K562 (cell line): ENCODE measurements at regions of chr5 and their contacts with region 1.

Region 1: DNA sequence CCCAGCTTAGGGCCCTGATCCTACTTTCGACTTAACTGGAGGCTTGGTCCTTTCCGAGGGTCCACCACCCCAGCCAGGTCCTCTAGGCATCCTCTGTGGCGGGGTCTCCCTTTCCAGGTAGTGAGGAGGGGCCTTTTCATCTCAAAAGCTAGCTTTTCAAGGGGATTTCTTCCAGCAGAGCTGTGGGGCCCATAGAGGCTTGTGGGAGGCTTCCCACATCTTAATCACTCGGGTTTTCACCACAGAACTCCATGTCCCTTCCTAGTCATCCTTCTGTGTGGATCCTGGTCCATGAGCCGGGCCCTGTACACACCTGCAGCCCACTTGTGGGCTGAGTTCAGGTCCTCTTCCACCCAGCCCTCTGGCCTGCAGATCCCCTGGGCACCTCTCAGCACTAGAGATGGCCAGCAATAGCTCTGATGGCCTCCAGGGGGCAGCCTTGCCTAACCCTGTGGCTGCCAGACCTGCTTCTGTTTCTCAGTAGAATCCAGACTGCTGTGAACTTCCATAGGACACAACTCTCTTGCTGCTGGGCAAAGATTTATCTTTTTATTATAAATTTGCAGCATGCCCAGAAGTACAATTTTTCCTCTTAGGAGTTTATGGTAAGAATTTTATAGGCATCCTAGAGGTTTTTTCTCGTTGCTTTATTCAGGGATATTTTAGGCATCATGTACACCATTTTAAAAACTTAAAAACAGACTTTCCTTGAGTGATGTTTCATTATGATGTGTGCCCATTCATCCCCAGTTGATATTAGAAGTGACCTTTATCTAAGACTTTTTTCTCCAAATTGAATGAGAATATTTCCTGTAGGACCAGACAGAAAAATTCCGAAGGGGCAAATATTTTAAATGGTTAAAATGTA is 208.9 kb downstream of the TRIO start:
- DNase-seq: peak; percentile 74 to 85 (median 78)
- ATAC-seq: peak; percentile 99
- H3K4me3 ChIP-seq: no peak overlapping the region
- H3K27ac ChIP-seq: no peak overlapping the region
- H3K4me1 ChIP-seq: no peaks in the 10 kb centered on the region
- H3K27me3 ChIP-seq: peaks cover 8 to 20% of the 10 kb centered on the region in 2 experiments
- CTCF ChIP-seq: peak; percentile 87 to 97 (median 92)
- EP300 ChIP-seq: no peak
- POLR2A ChIP-seq: no peak
- RAD21 ChIP-seq: peak; percentile 67 to 84

Region 2: DNA sequence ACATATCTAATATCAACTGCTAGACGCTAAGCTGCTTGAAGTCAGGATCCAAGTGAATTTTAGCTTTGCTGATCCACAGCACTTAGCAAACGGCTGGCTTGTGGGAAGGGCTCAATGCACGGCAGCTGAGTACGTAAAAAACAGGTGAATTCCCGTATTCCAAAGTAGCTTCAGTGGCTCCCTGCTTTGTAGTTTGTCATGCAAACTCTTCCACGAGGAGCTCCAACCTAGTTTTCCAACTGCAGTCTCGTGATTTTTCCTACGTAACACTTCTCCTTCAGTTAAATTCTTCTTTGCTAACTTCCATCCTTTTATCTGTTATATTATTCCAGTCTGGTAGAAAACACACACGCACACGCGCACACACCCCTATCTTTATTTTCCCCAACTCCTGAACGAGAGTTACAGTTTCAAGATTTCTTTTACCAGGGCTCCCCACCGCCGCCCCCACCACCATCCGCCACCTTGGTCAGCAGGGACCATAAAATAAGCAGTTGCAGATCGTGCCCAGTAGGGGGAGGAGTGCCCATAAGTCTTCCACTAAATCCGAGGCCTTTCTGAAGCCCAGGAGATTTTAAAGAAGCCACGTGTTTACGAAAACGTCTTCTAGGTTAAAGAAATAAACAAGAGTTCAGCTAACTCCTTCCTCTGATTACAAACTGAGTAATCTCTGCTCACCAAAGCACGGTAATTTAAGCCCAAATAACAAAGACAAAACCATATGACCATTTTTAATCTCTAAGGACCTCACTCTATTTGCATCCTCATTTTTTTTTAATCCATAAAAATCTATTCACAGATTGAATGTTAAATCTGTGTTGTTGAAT is 243.7 kb before region 1 on chr5:
- CTCF ChIA-PET with region 1: no interaction called
- POLR2A ChIA-PET with region 1: no interaction called
- in situ Hi-C with region 1: no loop called
- intact Hi-C with region 1: loop called (anchors 10 kb)
- DNase-seq: peak; percentile 68 to 81 (median 80)
- ATAC-seq: peak; percentile 97
- H3K4me3 ChIP-seq: no peak overlapping the region
- H3K27ac ChIP-seq: no peak overlapping the region
- H3K4me1 ChIP-seq: no peaks in the 10 kb centered on the region
- H3K27me3 ChIP-seq: peaks cover 0 to 6% of the 10 kb centered on the region in 2 experiments; a peak in 3 of 5 replicates
- CTCF ChIP-seq: peak; percentile 64 to 79 (median 73)
- EP300 ChIP-seq: no peak
- POLR2A ChIP-seq: no peak
- RAD21 ChIP-seq: peak; percentile 44 to 61

Region 3: GRCh38 chr5:14118527-14119320 is 233.4 kb before region 1 on chr5:
- CTCF ChIA-PET with region 1: no interaction called
- POLR2A ChIA-PET with region 1: no interaction called
- in situ Hi-C with region 1: no loop called
- intact Hi-C with region 1: no loop called
- DNase-seq: no peak
- ATAC-seq: no peak; the same call in 2 of the 3 replicates
- H3K4me3 ChIP-seq: no peak overlapping the region
- H3K27ac ChIP-seq: no peak overlapping the region
- H3K4me1 ChIP-seq: no peaks in the 10 kb centered on the region
- H3K27me3 ChIP-seq: peaks cover 0 to 9% of the 10 kb centered on the region in 2 experiments; a peak in 1 of 5 replicates
- CTCF ChIP-seq: no peak
- EP300 ChIP-seq: no peak
- POLR2A ChIP-seq: no peak
- RAD21 ChIP-seq: no peak

Region 4: GRCh38 chr5:14440582-14441431 is 88.7 kb after region 1 on chr5:
- CTCF ChIA-PET with region 1: no interaction called
- POLR2A ChIA-PET with region 1: no interaction called
- in situ Hi-C with region 1: no loop called
- intact Hi-C with region 1: no loop called
- DNase-seq: no peak
- ATAC-seq: no peak
- H3K4me3 ChIP-seq: no peak overlapping the region
- H3K27ac ChIP-seq: no peak overlapping the region
- H3K4me1 ChIP-seq: no peaks in the 10 kb centered on the region
- H3K27me3 ChIP-seq: peaks cover 37 to 47% of the 10 kb centered on the region in 2 experiments
- CTCF ChIP-seq: no peak
- EP300 ChIP-seq: no peak
- POLR2A ChIP-seq: no peak
- RAD21 ChIP-seq: no peak

Region 5: DNA sequence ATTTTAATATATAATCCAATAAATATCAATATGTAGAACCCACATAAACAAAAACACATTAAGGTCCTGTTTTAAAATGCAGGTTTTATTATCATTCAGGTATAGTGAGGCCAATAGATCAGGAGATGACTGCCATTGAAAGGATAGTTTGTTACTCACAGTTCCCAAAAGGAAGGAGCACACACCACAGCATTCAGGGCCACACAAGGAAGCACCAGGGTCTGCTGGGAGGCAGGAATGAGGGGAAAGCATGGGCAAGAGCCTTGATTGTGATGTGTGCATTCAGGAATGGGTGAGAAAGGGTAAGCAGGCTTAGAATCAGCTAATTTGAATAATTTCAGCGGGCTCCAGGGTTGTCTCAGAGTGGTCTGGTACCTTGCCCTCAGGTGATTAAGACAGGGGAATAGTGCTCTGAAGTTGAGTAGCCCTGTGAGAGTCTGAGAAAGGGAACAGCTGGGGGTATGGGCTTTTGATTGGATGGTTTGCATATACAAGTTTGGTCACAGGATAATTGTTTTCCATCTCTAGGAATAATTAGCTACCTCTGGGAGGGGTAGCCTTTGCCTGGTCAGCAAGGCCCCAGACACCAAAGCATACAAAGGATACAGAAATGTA is 292.7 kb after region 1 on chr5:
- CTCF ChIA-PET with region 1: interaction called, 4 read pairs
- POLR2A ChIA-PET with region 1: no interaction called
- in situ Hi-C with region 1: no loop called
- intact Hi-C with region 1: loop called (anchors 1 kb)
- DNase-seq: no peak
- ATAC-seq: no peak
- H3K4me3 ChIP-seq: no peak overlapping the region
- H3K27ac ChIP-seq: no peak overlapping the region
- H3K4me1 ChIP-seq: no peaks in the 10 kb centered on the region
- H3K27me3 ChIP-seq: peaks cover 0 to 8% of the 10 kb centered on the region in 2 experiments; a peak in 2 of 5 replicates
- CTCF ChIP-seq: no peak
- EP300 ChIP-seq: no peak
- POLR2A ChIP-seq: no peak
- RAD21 ChIP-seq: no peak

Region 6: DNA sequence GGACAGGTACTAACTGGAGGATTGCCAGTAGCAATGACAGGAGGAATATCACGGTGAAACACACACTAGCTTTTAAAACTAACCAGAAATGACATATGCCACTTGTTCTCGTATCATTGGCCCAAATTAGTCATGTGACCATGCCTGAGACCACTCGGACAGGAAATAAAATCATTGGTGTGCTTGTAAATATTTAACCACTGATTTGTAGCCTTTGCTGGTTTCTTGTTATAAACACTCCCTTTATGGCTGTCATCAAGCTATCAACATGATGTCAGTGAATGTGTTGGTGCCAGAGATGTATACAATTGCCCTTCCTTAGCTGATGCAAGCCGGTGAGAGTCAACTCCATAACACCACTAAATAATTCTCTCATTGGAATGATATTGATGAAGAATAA is 643.1 kb after region 1 on chr5:
- CTCF ChIA-PET with region 1: no interaction called
- POLR2A ChIA-PET with region 1: no interaction called
- in situ Hi-C with region 1: no loop called
- intact Hi-C with region 1: no loop called
- DNase-seq: no peak
- ATAC-seq: no peak
- H3K4me3 ChIP-seq: no peak overlapping the region
- H3K27ac ChIP-seq: no peak overlapping the region
- H3K4me1 ChIP-seq: no peaks in the 10 kb centered on the region
- H3K27me3 ChIP-seq: no peaks in the 10 kb centered on the region; a peak in 1 of 5 replicates
- CTCF ChIP-seq: no peak
- EP300 ChIP-seq: no peak
- POLR2A ChIP-seq: no peak
- RAD21 ChIP-seq: no peak

Region 7: DNA sequence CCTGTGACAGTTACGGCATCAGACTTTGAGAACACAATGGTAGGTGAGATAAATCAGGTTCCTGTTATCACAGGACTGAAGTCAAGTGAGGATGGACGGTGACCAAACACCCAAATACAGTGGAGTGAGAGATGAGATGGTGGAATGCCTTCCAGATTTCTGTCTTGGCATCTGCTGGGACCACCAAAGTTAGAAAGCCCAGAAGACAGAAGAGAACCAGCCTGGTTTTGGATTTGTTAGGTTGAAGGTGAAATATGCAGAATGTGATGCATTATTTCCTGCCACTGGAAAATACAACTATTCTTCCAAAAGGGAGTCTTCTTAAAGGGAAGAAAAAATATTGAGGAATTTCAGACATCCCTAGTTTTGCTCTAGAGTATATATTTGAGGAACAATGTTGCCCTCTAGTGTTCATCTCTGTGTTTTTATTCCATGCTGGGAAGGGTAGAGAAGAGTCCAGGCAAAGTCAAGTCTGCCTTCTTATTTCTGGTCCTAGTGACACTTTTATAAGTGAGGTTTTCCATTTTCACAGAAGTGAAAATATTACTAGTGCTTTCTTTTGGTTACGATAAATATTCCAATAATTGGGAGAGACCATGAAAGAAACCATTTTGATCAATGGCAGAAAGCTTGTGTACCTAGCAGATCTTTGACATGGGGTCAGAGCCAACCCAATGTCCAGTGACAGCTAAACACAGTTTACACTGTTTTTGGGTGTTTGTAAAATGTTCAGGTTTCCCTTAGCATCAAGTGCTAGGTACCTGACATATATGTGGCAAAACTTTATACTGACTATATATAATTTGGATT is 661.8 kb after region 1 on chr5:
- CTCF ChIA-PET with region 1: interaction called, 4 read pairs
- POLR2A ChIA-PET with region 1: no interaction called
- in situ Hi-C with region 1: no loop called
- intact Hi-C with region 1: loop called (anchors 5 kb)
- DNase-seq: peak; percentile 41 to 58 (median 47)
- ATAC-seq: peak; percentile 94
- H3K4me3 ChIP-seq: no peak overlapping the region
- H3K27ac ChIP-seq: no peak overlapping the region
- H3K4me1 ChIP-seq: no peaks in the 10 kb centered on the region; a peak in 1 of 5 replicates
- H3K27me3 ChIP-seq: no peaks in the 10 kb centered on the region
- CTCF ChIP-seq: peak; percentile 45 to 79 (median 63); a peak in 5 of 6 replicates
- EP300 ChIP-seq: no peak
- POLR2A ChIP-seq: no peak
- RAD21 ChIP-seq: peak; percentile 78 to 86